ENCODE measurements at regions of chr1 and their contacts with region 1.

Region 1: DNA sequence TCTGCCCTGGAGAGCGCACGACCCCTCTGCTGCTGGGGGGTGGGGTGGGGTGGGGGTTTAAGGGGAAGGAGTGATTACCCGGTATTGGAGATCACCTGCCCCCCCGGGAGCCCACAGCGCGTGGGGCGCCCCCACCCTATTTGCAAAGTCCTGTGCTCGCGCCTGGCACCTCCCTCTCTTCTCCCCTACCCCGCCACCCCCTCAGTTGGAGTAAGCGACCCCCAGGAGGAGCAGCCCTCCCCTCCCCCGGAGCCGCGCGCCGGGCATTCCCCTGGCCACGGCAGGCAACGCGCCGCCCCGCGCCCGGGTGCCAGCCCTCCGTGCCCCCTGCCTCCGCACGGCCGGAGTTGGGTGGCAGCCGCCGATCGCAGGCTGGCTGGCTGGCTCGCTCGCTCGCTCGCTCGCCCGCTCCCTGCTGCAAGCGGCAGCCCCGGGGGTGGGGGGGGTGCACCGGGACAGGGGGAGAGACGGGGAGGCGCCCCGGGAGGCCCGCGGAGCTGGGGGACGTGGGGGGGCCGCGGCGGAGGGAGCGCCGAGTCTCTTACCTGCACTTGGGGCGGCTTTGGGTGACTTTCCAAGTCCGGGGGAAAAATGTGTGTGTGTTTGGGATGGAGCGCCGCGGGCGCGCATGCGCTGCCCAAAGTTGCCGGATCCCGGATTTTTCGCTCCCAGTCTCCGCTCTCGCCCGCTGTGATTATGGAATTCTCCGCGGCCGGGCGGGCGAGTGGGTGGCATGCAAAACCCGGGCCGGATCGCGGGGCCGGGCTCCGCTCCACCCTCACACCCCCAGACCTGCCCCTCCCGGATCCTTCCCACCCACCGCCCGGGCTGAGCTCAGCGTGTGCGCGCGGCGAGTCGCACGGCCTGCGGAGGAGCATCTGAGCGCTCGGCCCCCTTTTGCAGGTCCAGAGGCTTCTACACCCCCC is at the start of gene CASZ1:
- DNase-seq: no peak
- ATAC-seq: no peak
- H3K4me3 Mint-ChIP-seq: no peak within 1 kb of the TSS
- H3K27ac Mint-ChIP-seq: no peak within 1 kb of the TSS
- H3K4me1 Mint-ChIP-seq: peaks cover 12% of the 10 kb centered on the region
- H3K27me3 Mint-ChIP-seq: peaks cover 66% of the 10 kb centered on the region
- CTCF ChIP-seq: no peak
- total RNA-seq, gene CASZ1: 2.9 to 4.1 TPM

Region 2: GRCh38 chr1:10694633-10695627 is 101.4 kb before region 1 on chr1:
- CTCF ChIA-PET with region 1: interaction called, 4 read pairs
- POLR2A ChIA-PET with region 1: no interaction called
- intact Hi-C with region 1: loop called (anchors 10 kb)
- DNase-seq: peak; percentile 77
- ATAC-seq: peak; percentile 57
- H3K4me3 Mint-ChIP-seq: peak overlapping the region; percentile 63
- H3K27ac Mint-ChIP-seq: no peak overlapping the region
- H3K4me1 Mint-ChIP-seq: peaks cover 40% of the 10 kb centered on the region
- H3K27me3 Mint-ChIP-seq: peaks cover 4% of the 10 kb centered on the region
- CTCF ChIP-seq: no peak

Region 3: DNA sequence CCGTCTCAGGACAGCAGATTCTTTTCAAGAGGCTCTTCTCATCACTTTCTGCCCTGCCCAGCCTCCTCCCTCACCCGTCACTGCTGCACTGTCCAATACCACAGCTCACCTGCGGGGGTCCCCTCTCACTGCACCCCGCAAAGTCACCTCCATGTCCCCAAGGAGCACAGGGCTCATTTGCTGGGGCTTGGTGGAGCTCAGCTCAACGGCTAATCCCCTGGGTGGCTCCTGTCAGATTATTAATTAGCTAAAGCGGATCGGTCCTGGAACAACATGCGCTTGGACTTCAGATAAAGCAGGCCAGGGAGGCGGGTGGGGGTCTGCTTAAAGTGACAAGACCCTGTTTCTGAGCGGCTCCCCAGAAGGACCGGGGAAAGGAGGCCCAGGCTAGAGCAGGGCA is 43.0 kb before region 1 on chr1:
- CTCF ChIA-PET with region 1: no interaction called
- POLR2A ChIA-PET with region 1: no interaction called
- intact Hi-C with region 1: no loop called
- DNase-seq: peak; percentile 35
- ATAC-seq: peak; percentile 43
- H3K4me3 Mint-ChIP-seq: no peak overlapping the region
- H3K27ac Mint-ChIP-seq: no peak overlapping the region
- H3K4me1 Mint-ChIP-seq: peaks cover 10% of the 10 kb centered on the region
- H3K27me3 Mint-ChIP-seq: no peaks in the 10 kb centered on the region
- CTCF ChIP-seq: no peak

Region 4: DNA sequence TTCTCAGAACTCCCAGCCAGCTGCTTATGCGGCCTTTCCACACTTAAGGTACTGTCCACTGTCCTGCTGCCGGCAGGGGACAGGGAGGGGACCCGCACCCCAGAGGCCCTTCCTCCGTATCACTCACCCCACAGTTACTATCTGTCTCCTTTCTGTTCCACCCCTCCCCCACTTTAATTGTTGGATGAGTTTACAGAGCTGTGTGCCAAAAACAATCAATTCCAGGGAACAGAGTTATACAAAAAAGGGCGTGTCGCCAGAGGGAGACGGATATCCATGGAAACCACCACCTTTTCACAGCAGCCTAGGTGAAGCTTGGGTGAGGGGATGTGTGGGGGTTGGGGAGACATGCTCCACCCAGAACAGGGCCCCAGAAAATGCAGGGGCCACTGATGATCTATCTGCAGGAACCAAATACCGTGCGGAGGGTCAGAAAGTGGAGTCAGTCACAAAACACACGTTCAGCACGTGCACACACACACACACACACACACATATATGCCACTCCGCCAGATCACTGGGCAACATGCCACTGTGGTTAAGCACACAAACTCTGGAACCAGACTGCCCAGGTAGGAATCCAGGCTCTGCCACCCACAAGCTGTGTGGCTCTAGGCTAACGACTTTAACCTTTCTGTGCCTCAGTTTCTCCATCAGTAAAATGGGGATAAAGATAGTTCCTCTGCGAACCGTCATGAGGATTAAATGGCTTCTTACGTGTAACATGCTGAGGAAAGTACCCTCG is 30.4 kb before region 1 on chr1:
- CTCF ChIA-PET with region 1: no interaction called
- POLR2A ChIA-PET with region 1: no interaction called
- intact Hi-C with region 1: no loop called
- DNase-seq: no peak
- ATAC-seq: no peak
- H3K4me3 Mint-ChIP-seq: no peak overlapping the region
- H3K27ac Mint-ChIP-seq: no peak overlapping the region
- H3K4me1 Mint-ChIP-seq: no peaks in the 10 kb centered on the region
- H3K27me3 Mint-ChIP-seq: no peaks in the 10 kb centered on the region
- CTCF ChIP-seq: no peak

Region 5: GRCh38 chr1:11013172-11013531 is 216.9 kb after region 1 on chr1:
- CTCF ChIA-PET with region 1: no interaction called
- POLR2A ChIA-PET with region 1: no interaction called
- intact Hi-C with region 1: no loop called
- DNase-seq: no peak
- ATAC-seq: no peak
- H3K4me3 Mint-ChIP-seq: peak overlapping the region; percentile 96
- H3K27ac Mint-ChIP-seq: peak overlapping the region; percentile 90
- H3K4me1 Mint-ChIP-seq: peaks cover 27% of the 10 kb centered on the region
- H3K27me3 Mint-ChIP-seq: no peaks in the 10 kb centered on the region
- CTCF ChIP-seq: no peak

Measured in activated CD8-positive, alpha-beta T cell treated with anti-CD3 and anti-CD28 coated beads for 36 hours (primary cell).